GM13977 (cell line): ENCODE measurements at regions of chr1 and their contacts with region 1.

Region 1: DNA sequence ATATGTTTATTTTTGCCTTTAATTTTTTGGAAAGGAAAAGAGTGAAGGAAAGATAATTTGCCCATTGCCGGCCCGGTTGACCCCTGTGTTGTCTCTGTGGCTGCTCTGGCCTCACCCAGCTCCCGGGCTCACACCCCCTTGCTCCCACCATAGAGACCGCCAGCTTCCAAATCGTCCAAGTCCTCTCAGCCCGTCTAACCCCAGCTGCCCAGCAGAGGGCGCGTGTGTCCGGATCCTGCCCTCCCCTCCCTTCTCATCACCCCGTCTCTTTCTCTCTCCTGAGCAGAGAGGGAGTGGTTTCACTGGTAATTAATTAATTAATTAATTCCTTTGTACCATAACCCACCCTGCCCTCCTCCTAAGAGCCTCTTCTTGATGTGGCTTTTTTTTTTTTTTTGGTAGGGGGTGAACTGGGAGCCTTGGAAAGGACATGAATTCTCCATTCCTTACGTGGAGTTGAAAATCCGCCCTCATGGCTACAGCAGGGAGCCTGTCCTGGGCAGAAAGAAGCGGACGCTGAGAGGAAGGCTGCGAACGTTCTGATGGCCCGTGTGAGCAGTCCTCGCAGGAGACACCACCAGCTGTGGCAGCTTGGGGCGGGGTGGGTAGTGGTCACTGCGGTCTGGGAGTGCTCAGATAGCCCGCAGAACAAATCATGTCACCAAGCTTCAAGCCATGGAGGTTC is 45.9 kb downstream of the KIAA0040 start:
- DNase-seq: peak; percentile 74
- CTCF ChIP-seq: peak; percentile 94

Region 2: DNA sequence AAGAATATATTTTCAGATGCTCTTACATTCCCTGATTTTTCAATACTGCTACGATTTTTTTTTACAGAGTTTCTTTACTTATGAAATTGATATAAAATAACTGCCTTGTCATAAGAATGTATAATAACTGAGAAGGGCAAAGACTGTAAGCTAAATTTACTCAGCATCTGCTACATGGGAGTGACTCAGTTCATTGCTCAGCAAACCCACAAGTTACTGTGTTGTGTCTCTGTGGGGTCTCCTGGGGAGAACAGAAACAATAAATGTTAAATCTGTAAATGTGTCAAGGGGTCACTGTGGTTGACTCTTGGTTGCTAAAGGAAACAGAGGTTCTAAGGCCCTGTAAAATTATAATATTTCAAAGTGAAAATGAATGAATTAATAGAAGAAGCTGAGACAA is 357.3 kb before region 1 on chr1:
- in situ Hi-C with region 1: loop called (anchors 25 kb)
- DNase-seq: peak; percentile 62
- CTCF ChIP-seq: no peak

Region 3: GRCh38 chr1:175023043-175023921 is 123.4 kb before region 1 on chr1 and contains the start of gene MRPS14:
- in situ Hi-C with region 1: loop called (anchors 10 kb)
- DNase-seq: peak; percentile 91
- CTCF ChIP-seq: no peak